GM10248 (cell line): ENCODE measurements at regions of chr17 and their contacts with region 1.

Region 1: DNA sequence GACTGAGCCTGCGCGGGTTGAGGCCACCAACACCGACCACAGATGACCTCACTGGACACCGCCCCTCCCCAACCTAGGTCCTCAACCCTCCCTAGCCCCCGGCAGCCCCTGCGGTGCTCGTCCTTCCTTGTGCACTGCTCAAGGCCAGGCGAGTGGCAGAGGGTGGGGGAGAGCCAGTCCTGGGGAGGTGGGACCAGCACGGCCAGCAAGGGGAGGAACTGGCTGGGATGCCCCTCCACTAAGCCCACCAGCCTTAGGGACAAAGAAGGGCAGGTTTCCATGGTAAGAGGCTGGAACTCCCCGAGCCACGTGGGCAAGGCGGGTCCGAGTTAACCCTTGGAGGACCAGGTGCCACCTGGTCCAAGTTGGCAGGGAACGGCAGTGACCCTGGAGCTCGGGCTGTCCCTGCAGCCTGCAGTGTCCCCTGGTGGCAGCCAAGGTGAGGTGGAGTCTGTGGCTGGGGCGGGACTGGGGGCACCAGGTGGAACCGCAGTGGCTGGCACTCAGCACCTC is 9.2 kb downstream of the FSCN2 start:
- DNase-seq: peak; percentile 59
- CTCF ChIP-seq: peak; percentile 70

Region 2: GRCh38 chr17:81508639-81509206 is 28.7 kb before region 1 on chr17:
- CTCF ChIA-PET with region 1: no interaction called
- POLR2A ChIA-PET with region 1: interaction called, 13 read pairs
- DNase-seq: no peak
- CTCF ChIP-seq: no peak

Region 3: GRCh38 chr17:81519284-81519955 is 18.0 kb before region 1 on chr17:
- CTCF ChIA-PET with region 1: interaction called, 15 read pairs
- POLR2A ChIA-PET with region 1: no interaction called
- DNase-seq: peak; percentile 77
- CTCF ChIP-seq: peak; percentile 42

Region 4: DNA sequence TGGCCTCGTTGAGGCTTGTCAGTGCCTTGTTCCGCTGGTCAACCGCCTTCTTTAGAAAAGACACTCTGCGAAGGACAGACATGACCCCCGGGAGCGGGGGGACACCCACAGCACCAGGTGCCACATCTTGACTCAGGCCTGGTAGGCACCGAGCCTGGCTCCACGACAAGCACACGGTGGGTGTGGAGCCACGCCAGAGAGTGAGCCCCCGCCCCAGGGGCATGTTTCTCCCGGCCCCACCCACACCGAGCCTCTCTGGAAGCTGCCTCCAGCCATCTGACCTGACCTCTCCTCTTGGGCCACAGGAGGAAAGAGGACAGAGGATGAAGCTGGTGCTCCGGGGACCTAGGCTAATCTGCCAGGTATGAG is 10.2 kb after region 1 on chr17:
- CTCF ChIA-PET with region 1: no interaction called
- POLR2A ChIA-PET with region 1: no interaction called
- DNase-seq: no peak
- CTCF ChIP-seq: no peak